Gastrocnemius medialis (tissue), 4 donors: ENCODE measurements at regions of chr1 and their contacts with region 1.

Region 1: DNA sequence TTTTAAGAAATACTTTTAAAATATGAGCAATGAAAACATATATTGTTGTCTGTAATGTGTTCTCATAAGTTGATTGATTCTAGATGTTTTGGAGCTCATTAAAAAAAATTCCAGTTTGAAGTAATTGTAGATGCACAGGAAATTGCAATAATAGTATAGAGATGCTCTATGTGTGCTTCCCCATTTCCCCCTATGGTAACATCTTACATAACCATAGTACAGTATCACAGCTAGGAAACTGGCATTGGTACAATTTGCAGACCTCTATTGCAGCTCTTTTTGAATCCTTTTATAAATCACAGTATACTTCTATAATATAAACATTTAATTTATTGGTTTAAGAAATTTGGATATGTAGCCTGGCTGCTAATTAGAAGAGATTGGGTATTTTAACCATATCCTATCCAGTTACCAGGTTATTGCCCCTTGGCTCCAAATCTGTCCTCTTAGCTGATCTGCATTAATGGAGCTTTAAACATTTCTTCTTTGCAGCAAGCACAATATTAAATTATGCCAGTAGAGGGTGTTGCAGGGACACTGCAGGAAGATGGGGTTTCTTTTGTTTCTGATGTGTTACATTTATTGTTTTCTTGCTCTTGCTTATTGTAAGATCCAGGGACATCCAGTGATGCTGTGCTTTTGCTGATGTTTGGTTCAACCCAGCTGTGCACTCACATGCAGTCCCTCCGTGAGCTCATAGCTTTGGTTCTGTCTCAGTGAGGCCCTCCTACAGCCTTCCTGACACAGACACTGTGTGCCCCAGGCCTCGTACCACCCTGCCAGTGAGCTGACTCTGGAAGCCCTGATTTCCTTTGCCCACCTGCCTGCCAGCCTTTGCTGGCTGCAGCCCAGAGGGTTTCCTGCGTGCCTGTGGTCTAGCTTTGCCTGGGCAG is 103.3 kb downstream of the RABGAP1L start:
- DNase-seq: no peak
- ATAC-seq: no peak
- H3K4me3 ChIP-seq: no peak overlapping the region
- H3K27ac ChIP-seq: no peak overlapping the region
- H3K4me1 ChIP-seq: no peaks in the 10 kb centered on the region
- H3K27me3 ChIP-seq: no peaks in the 10 kb centered on the region
- CTCF ChIP-seq: peak in 3 of 5 experiments; percentile 4 to 29 (median 21)
- POLR2A ChIP-seq: no peak

Region 2: GRCh38 chr1:174114788-174115448 is 147.7 kb before region 1 on chr1:
- in situ Hi-C with region 1: no loop called
- intact Hi-C with region 1: no loop called
- DNase-seq: no peak
- ATAC-seq: peak in 1 of 2 donors; percentile 65
- H3K4me3 ChIP-seq: no peak overlapping the region
- H3K27ac ChIP-seq: no peak overlapping the region
- H3K4me1 ChIP-seq: no peaks in the 10 kb centered on the region
- H3K27me3 ChIP-seq: no peaks in the 10 kb centered on the region
- CTCF ChIP-seq: peak in 4 of 5 experiments; percentile 13 to 41 (median 31)
- POLR2A ChIP-seq: no peak

Region 3: GRCh38 chr1:174469687-174470086 is 207.1 kb after region 1 on chr1:
- in situ Hi-C with region 1: no loop called
- intact Hi-C with region 1: no loop called
- DNase-seq: no peak
- ATAC-seq: no peak
- H3K4me3 ChIP-seq: no peak overlapping the region
- H3K27ac ChIP-seq: no peak overlapping the region
- H3K4me1 ChIP-seq: no peaks in the 10 kb centered on the region
- H3K27me3 ChIP-seq: no peaks in the 10 kb centered on the region
- CTCF ChIP-seq: no peak
- POLR2A ChIP-seq: no peak

Region 4: GRCh38 chr1:174652569-174653280 is 390.1 kb after region 1 on chr1:
- in situ Hi-C with region 1: no loop called
- intact Hi-C with region 1: no loop called
- DNase-seq: no peak
- ATAC-seq: no peak
- H3K4me3 ChIP-seq: no peak overlapping the region
- H3K27ac ChIP-seq: no peak overlapping the region
- H3K4me1 ChIP-seq: no peaks in the 10 kb centered on the region
- H3K27me3 ChIP-seq: no peaks in the 10 kb centered on the region
- CTCF ChIP-seq: no peak
- POLR2A ChIP-seq: no peak

Region 5: GRCh38 chr1:174736831-174737230 is 474.2 kb after region 1 on chr1:
- in situ Hi-C with region 1: loop called (anchors 5 to 25 kb)
- intact Hi-C with region 1: loop called (anchors 5 kb)
- DNase-seq: no peak
- ATAC-seq: no peak
- H3K4me3 ChIP-seq: no peak overlapping the region
- H3K27ac ChIP-seq: no peak overlapping the region
- H3K4me1 ChIP-seq: no peaks in the 10 kb centered on the region
- H3K27me3 ChIP-seq: no peaks in the 10 kb centered on the region
- CTCF ChIP-seq: no peak
- POLR2A ChIP-seq: no peak

Region 6: GRCh38 chr1:174743654-174744561 is 481.3 kb after region 1 on chr1:
- in situ Hi-C with region 1: loop called (anchors 5 to 25 kb)
- intact Hi-C with region 1: loop called (anchors 5 kb)
- DNase-seq: no peak
- ATAC-seq: peak in 1 of 2 donors; percentile 30
- H3K4me3 ChIP-seq: no peak overlapping the region
- H3K27ac ChIP-seq: no peak overlapping the region
- H3K4me1 ChIP-seq: no peaks in the 10 kb centered on the region
- H3K27me3 ChIP-seq: no peaks in the 10 kb centered on the region
- CTCF ChIP-seq: peak in 4 of 5 experiments; percentile 15 to 66 (median 48)
- POLR2A ChIP-seq: no peak